ENCODE measurements at regions of chr3 and their contacts with region 1.

Region 1: GRCh38 chr3:110420158-110420641 is 651.4 kb upstream of the NECTIN3 start:
- DNase-seq: peak; percentile 90
- ATAC-seq: peak; percentile 91
- H3K4me3 ChIP-seq: peak overlapping the region; percentile 44; the same call in 1 of the 2 replicates
- H3K27ac ChIP-seq: peak overlapping the region; percentile 77
- H3K4me1 ChIP-seq: peaks cover 5% of the 10 kb centered on the region
- H3K27me3 ChIP-seq: no peaks in the 10 kb centered on the region
- CTCF ChIP-seq: no peak
- POLR2A ChIP-seq: no peak
- RAD21 ChIP-seq: no peak; the same call in 1 of the 2 replicates

Region 2: GRCh38 chr3:110343945-110344344 is 76.3 kb before region 1 on chr3:
- CTCF ChIA-PET with region 1: no interaction called
- POLR2A ChIA-PET with region 1: no interaction called
- dilution Hi-C with region 1: no loop called
- in situ Hi-C with region 1: no loop called
- intact Hi-C with region 1: loop called (anchors 5 kb)
- DNase-seq: peak; percentile 33
- ATAC-seq: no peak
- H3K4me3 ChIP-seq: no peak overlapping the region
- H3K27ac ChIP-seq: no peak overlapping the region
- H3K4me1 ChIP-seq: peaks cover 6% of the 10 kb centered on the region; the same call in 1 of the 2 replicates
- H3K27me3 ChIP-seq: no peaks in the 10 kb centered on the region
- CTCF ChIP-seq: no peak
- POLR2A ChIP-seq: no peak
- RAD21 ChIP-seq: no peak

Region 3: GRCh38 chr3:110526777-110527727 is 106.9 kb after region 1 on chr3:
- CTCF ChIA-PET with region 1: no interaction called
- POLR2A ChIA-PET with region 1: interaction called, 3 read pairs
- dilution Hi-C with region 1: no loop called
- in situ Hi-C with region 1: no loop called
- intact Hi-C with region 1: loop called (anchors 2 kb)
- DNase-seq: peak; percentile 95
- ATAC-seq: peak; percentile 90
- H3K4me3 ChIP-seq: no peak overlapping the region
- H3K27ac ChIP-seq: peak overlapping the region; percentile 67
- H3K4me1 ChIP-seq: peaks cover 15% of the 10 kb centered on the region
- H3K27me3 ChIP-seq: no peaks in the 10 kb centered on the region
- CTCF ChIP-seq: no peak
- POLR2A ChIP-seq: no peak; the same call in 1 of the 2 replicates
- RAD21 ChIP-seq: no peak; the same call in 1 of the 2 replicates

Region 4: GRCh38 chr3:110773413-110773954 is 353.3 kb after region 1 on chr3:
- CTCF ChIA-PET with region 1: no interaction called
- POLR2A ChIA-PET with region 1: no interaction called
- dilution Hi-C with region 1: no loop called
- in situ Hi-C with region 1: no loop called
- intact Hi-C with region 1: loop called (anchors 10 kb)
- DNase-seq: peak; percentile 98
- ATAC-seq: peak; percentile 92
- H3K4me3 ChIP-seq: no peak overlapping the region
- H3K27ac ChIP-seq: peak overlapping the region; percentile 80
- H3K4me1 ChIP-seq: peaks cover 7% of the 10 kb centered on the region; the same call in 1 of the 2 replicates
- H3K27me3 ChIP-seq: no peaks in the 10 kb centered on the region
- CTCF ChIP-seq: no peak
- POLR2A ChIP-seq: no peak
- RAD21 ChIP-seq: no peak; the same call in 1 of the 2 replicates